ENCODE measurements at regions of chr9 and their contacts with region 1.

Region 1: DNA sequence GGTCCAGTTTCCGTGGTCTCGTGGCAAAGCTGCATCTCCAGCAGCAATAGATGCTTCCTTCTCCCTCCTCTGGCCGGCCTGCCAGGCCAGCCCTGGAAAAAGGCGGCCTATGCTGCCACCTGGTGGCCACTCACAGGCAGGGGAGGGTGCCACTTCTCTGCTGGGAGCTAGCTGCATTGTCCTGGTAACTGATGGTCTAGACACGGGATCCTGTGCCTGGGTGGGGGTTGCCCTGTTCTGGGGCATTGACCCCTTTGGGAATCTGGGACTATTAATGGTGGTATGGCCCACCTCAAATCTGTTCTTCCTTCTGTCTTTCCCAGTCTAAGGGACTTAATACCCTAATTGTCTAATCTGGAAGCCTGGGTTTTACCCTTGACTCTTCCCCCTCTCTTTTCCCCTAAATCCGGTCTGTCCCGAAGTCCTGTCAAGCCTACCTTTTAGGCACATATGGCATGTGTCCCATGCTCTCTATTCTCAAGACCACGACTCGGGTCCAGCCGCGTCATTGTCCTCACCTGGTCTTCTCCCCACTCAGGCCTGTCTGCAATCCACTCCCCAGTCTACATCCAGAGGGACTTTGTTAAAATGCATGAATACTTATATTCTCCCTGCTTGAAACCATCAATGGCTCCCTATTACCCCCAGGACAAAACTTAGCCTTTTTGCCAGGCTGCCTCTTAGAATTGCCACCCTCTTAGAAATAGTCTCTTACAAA is 20.0 kb upstream of the PTGS1 start:
- DNase-seq: peak; percentile 70 to 78 (median 72)
- H3K4me3 ChIP-seq: no peak overlapping the region
- H3K4me3 Mint-ChIP-seq: no peak overlapping the region
- H3K27ac ChIP-seq: no peak overlapping the region
- H3K27ac Mint-ChIP-seq: peak overlapping the region in 1 of 7 donors; percentile 57
- H3K4me1 ChIP-seq: peaks cover 24 to 29% of the 10 kb centered on the region in 2 donors
- H3K4me1 Mint-ChIP-seq: peaks cover 32% of the 10 kb centered on the region
- H3K27me3 ChIP-seq: peaks cover 0 to 27% of the 10 kb centered on the region in 2 donors
- H3K27me3 Mint-ChIP-seq: peaks cover 28 to 38% (median 35%) of the 10 kb centered on the region in 3 donors
- CTCF ChIP-seq: peak; percentile 92

Region 2: DNA sequence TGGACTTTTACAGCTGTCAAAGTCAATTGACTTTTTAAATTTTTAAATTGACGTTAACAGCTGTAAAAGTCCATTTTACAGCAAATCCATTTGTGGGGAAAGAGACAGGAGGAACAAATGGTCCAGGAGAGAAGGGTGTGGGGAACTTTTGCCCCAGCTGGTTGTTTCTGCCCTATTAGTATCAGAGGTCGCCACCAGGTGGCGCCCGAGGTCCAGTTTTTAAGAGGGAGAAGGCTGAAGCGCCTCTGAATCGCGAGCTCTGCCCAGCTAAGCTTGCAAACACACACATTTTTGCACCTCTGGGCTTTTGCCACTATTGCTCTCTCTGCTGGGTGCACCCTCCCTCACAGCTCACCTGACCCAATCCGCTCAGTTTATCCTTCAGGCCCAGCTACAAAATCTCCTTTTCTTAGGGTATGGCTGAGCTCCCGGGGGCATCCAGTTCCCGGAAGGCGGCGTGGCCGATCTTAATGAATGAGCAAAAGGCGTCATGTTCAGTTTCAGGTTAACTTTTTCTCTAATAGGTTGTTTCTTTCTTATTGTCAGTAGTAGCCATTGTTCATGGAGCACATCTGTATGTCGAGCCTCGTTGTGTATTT is 251.4 kb before region 1 on chr9:
- intact Hi-C with region 1: loop called (anchors 2 to 10 kb)
- DNase-seq: peak; percentile 63 to 69 (median 67)
- H3K4me3 ChIP-seq: peak overlapping the region in 1 of 3 experiments; percentile 43
- H3K4me3 Mint-ChIP-seq: peak overlapping the region; percentile 65 to 76
- H3K27ac ChIP-seq: no peak overlapping the region
- H3K27ac Mint-ChIP-seq: no peak overlapping the region
- H3K4me1 ChIP-seq: peaks cover 5 to 6% of the 10 kb centered on the region in 2 donors
- H3K4me1 Mint-ChIP-seq: peaks cover 12% of the 10 kb centered on the region
- H3K27me3 ChIP-seq: peaks cover 0 to 5% of the 10 kb centered on the region in 2 donors
- H3K27me3 Mint-ChIP-seq: peaks cover 8 to 20% (median 18%) of the 10 kb centered on the region in 3 donors
- CTCF ChIP-seq: peak; percentile 87

Region 3: GRCh38 chr9:122125158-122125508 is 225.7 kb before region 1 on chr9:
- intact Hi-C with region 1: loop called (anchors 2 kb)
- DNase-seq: peak; percentile 56 to 66 (median 66)
- H3K4me3 ChIP-seq: no peak overlapping the region
- H3K4me3 Mint-ChIP-seq: peak overlapping the region in 1 of 2 donors; percentile 86
- H3K27ac ChIP-seq: no peak overlapping the region
- H3K27ac Mint-ChIP-seq: no peak overlapping the region
- H3K4me1 ChIP-seq: peaks cover 4 to 9% of the 10 kb centered on the region in 2 donors
- H3K4me1 Mint-ChIP-seq: peaks cover 12% of the 10 kb centered on the region
- H3K27me3 ChIP-seq: peaks cover 18 to 30% of the 10 kb centered on the region in 2 donors
- H3K27me3 Mint-ChIP-seq: peaks cover 38 to 43% (median 41%) of the 10 kb centered on the region in 3 donors
- CTCF ChIP-seq: peak; percentile 88

Region 4: DNA sequence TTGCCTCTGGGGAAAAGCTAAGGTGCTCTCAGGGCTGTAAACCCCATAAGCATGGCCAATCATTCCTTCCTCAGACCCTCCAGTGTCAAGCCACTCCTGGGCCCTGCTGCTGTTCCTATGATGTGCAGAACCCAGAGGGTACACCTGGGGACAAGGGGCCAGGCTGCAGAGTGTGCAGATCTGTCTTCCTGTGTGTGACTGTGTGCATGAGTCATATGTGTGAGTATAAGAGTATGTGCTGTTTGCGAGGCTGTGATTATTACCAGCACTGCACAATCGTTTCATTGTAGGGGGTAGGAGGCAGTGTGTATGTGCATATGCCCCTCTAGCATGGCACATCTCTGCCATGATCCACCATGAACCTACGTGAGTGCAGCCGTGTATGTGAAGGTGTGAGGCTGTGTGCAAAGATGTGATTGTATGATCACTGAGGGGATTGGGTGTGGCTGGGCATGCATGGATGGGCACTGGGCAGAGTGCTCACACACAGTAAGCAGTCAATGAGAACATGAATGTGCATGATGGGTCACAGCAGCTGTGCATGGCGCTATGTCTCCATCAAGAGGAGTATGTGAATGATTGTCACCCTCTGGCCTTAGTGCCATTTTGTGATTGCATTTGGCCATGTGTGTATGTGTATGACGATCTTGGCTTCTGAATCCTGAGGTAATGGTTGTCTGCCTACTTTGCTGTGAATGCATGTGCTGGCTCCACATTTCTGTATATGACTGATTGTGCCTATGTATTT is 446.7 kb after region 1 on chr9:
- intact Hi-C with region 1: no loop called
- DNase-seq: no peak
- H3K4me3 ChIP-seq: no peak overlapping the region
- H3K4me3 Mint-ChIP-seq: no peak overlapping the region
- H3K27ac ChIP-seq: no peak overlapping the region
- H3K27ac Mint-ChIP-seq: no peak overlapping the region
- H3K4me1 ChIP-seq: no peaks in the 10 kb centered on the region
- H3K4me1 Mint-ChIP-seq: no peaks in the 10 kb centered on the region
- H3K27me3 ChIP-seq: no peaks in the 10 kb centered on the region
- H3K27me3 Mint-ChIP-seq: peaks cover 2 to 4% (median 3%) of the 10 kb centered on the region in 3 donors
- CTCF ChIP-seq: no peak

Region 5: DNA sequence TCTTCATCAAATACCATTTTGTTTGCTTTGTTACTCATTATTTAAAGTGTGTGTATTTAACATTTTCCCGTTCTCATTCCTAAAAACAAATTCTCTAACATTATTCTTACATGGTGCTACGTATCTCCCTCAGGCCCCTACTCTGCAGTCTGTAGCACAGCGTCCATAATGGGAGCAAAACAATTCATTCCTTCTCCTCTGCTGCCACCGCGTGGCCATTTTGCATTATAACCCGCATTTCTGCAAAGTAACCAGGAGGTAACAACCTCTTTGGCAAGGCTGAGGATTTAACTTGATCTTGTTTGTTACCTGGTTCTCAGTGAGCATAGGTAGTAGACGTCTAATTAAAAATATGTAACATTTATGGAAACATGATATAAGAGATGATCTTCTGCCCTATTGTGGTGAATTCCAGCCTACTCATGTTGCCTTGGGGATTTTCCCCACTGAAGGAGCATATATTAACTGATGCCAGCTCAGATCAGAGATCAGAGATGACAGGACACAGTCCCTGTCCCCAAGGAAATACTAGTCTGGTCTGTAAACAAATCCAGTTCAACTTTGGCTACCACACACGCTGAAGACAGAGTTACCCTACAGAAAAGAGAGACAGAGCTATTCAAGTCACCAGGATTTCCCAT is 459.6 kb after region 1 on chr9:
- intact Hi-C with region 1: loop called in 1 of 2 experiments (anchors 10 kb)
- DNase-seq: peak; percentile 59 to 77 (median 63)
- H3K4me3 ChIP-seq: no peak overlapping the region
- H3K4me3 Mint-ChIP-seq: no peak overlapping the region
- H3K27ac ChIP-seq: no peak overlapping the region
- H3K27ac Mint-ChIP-seq: no peak overlapping the region
- H3K4me1 ChIP-seq: peaks cover 8 to 10% of the 10 kb centered on the region in 2 donors
- H3K4me1 Mint-ChIP-seq: peaks cover 9% of the 10 kb centered on the region
- H3K27me3 ChIP-seq: no peaks in the 10 kb centered on the region
- H3K27me3 Mint-ChIP-seq: peaks cover 0 to 7% (median 0%) of the 10 kb centered on the region in 3 donors
- CTCF ChIP-seq: peak; percentile 85

Measured in CD14-positive monocyte (primary cell).